ENCODE measurements at regions of chr3 and their contacts with region 1.

Region 1: GRCh38 chr3:21645121-21645897 is 105.7 kb downstream of the ZNF385D start:
- DNase-seq: peak; percentile 22 to 23
- ATAC-seq: peak; percentile 70 to 83
- H3K4me3 ChIP-seq: no peak overlapping the region
- H3K27ac ChIP-seq: peak overlapping the region; percentile 21 to 62 (median 38)
- H3K4me1 ChIP-seq: peaks cover 6 to 25% of the 10 kb centered on the region in 2 donors
- H3K27me3 ChIP-seq: no peaks in the 10 kb centered on the region
- CTCF ChIP-seq: no peak
- POLR2A ChIP-seq: no peak

Region 2: DNA sequence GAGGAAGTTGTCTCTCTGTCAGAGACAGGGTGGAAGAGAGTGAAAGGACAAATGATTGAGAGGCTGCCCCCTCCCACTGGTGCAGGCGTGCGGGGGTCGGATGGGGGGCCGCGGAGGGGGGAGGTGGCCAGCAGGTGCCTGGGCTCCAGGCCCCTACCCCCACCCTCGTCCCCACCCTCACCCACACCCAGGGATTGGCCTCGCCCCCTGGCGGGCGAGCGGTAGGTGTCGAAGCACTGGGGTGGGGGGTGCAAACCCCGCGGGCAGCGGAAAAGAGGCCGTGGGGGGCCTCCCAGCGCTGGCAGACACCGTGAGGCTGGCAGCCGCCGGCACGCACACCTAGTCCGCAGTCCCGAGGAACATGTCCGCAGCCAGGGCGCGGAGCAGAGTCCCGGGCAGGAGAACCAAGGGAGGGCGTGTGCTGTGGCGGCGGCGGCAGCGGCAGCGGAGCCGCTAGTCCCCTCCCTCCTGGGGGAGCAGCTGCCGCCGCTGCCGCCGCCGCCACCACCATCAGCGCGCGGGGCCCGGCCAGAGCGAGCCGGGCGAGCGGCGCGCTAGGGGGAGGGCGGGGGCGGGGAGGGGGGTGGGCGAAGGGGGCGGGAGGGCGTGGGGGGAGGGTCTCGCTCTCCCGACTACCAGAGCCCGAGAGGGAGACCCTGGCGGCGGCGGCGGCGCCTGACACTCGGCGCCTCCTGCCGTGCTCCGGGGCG is 1605.4 kb before region 1 on chr3 and contains the start of gene KAT2B:
- in situ Hi-C with region 1: no loop called
- intact Hi-C with region 1: no loop called
- DNase-seq: peak; percentile 71 to 79
- ATAC-seq: peak; percentile 62 to 71
- H3K4me3 ChIP-seq: peak within 1 kb of the TSS; percentile 79 to 94 (median 90)
- H3K27ac ChIP-seq: peak within 1 kb of the TSS; percentile 95 to 99 (median 99)
- H3K4me1 ChIP-seq: peaks cover 25 to 35% of the 10 kb centered on the region in 2 donors
- H3K27me3 ChIP-seq: no peaks in the 10 kb centered on the region
- CTCF ChIP-seq: peak; percentile 47 to 88 (median 74)
- POLR2A ChIP-seq: peak; percentile 33 to 75
- total RNA-seq, gene KAT2B: 39.4 to 87.3 (median 61.1) TPM

Region 3: GRCh38 chr3:21752749-21753347 is 107.5 kb after region 1 on chr3:
- in situ Hi-C with region 1: no loop called
- intact Hi-C with region 1: loop called (anchors 10 kb)
- DNase-seq: peak in 1 of 2 donors; percentile 12
- ATAC-seq: peak; percentile 49 to 67
- H3K4me3 ChIP-seq: no peak overlapping the region
- H3K27ac ChIP-seq: peak overlapping the region in 1 of 4 donors; percentile 4
- H3K4me1 ChIP-seq: peaks cover 5 to 12% of the 10 kb centered on the region in 2 donors
- H3K27me3 ChIP-seq: peaks cover 0 to 4% (median 0%) of the 10 kb centered on the region in 3 donors
- CTCF ChIP-seq: peak in 4 of 5 experiments; percentile 31 to 58 (median 53)
- POLR2A ChIP-seq: no peak